ENCODE measurements at regions of chr18 and their contacts with region 1.

Region 1: DNA sequence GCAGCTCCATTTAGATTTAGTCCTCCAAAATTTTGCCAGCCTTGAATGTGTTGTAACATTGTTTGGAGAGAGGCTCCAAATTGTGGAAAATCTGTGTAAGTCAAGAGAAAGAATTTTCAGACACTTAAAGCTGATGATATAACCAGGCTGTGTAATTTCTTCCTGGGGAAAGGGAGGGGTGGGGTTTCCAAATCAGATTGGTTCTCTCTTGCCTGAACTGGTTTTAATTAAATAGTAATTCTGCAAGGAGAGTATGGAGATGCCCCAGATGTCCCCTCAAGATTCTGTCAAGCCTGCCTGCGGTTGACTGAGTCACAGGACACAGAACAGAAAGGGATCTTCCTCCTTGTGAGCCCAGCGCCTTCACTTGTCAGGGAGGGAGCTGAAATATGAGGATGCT is 54.5 kb downstream of the C18orf63 start:
- DNase-seq: no peak
- H3K4me3 Mint-ChIP-seq: no peak overlapping the region
- H3K27ac Mint-ChIP-seq: no peak overlapping the region
- H3K4me1 Mint-ChIP-seq: peaks cover 47% of the 10 kb centered on the region
- H3K27me3 Mint-ChIP-seq: peaks cover 43% of the 10 kb centered on the region

Region 2: DNA sequence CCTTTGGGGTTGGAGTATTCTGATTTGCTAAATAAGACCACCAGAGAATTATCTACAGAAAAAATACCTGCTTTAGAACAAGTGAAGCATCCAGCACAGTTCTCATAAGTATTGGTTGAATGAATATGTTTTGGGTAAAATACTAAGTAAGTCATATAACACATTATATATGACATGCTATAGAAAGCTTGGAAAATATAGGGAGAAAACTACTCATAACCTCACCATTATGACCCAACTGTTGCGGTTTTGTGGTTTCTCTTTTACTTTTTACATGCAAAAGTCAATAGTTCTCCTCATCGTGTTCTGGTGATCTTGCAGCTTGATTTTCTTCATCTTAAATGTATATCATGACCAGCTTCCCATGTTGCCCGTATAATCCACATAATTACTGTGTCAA is 20.8 kb after region 1 on chr18:
- intact Hi-C with region 1: loop called (anchors 2 kb)
- DNase-seq: no peak
- H3K4me3 Mint-ChIP-seq: no peak overlapping the region
- H3K27ac Mint-ChIP-seq: no peak overlapping the region
- H3K4me1 Mint-ChIP-seq: peaks cover 17% of the 10 kb centered on the region
- H3K27me3 Mint-ChIP-seq: peaks cover 52% of the 10 kb centered on the region

Region 3: DNA sequence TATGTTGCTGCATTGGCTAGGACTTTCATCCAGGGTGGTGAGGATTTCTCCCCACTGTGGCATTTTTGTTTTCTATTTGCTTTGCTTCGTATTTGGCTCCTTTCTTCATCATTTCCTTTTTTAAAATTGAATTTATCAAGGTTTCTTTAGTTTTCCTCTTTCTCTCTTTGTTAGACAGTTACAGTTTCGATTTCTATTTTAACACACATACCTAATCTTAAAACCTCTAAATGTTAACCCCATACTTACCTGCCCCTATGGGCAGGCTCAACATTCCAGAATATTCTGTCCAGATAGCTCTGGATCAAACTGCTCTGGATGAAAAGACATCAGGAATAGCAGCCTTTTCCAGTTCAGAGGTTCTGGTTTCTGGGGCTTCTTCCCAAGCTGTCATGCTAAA is 37.8 kb after region 1 on chr18:
- intact Hi-C with region 1: loop called (anchors 5 kb)
- DNase-seq: no peak
- H3K4me3 Mint-ChIP-seq: peak overlapping the region; percentile 53
- H3K27ac Mint-ChIP-seq: peak overlapping the region; percentile 77
- H3K4me1 Mint-ChIP-seq: peaks cover 27% of the 10 kb centered on the region
- H3K27me3 Mint-ChIP-seq: peaks cover 4% of the 10 kb centered on the region

Region 4: DNA sequence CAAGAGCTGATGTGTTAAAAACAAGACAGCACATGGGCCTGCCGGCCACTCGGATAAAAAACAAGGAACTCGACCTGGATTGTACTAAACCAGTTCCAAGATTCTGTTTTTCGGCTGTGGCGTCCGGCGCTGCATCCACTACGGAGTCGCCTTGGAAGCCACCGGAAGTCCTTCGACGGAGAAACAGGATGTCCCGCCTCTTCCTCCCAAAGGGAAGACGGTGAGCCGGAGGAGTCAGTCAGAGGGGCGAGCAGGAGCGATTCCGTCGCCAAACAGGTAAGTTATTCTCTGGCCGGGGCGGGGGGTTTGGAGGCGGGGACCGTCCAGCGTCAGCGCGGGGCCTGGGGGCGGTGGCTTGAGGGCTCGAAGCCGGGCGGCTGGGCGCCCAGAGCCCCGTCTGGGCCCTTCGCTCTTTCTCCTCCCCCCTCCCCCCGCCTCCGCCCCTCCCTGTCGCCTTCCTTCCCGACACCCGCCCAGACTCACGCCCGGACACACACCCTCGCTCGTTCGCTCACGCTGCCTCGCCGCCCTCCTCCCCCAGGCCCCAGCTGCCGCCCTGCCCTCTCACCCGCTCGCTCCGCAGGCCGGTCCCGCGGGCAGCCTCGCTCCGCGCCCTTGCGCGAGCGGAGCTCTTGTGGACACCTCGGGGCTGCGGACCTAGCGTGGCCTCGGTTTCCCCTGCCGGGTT is 227.7 kb after region 1 on chr18 and contains the start of gene ZNF407:
- intact Hi-C with region 1: loop called (anchors 5 kb)
- DNase-seq: peak; percentile 85
- H3K4me3 Mint-ChIP-seq: peak within 1 kb of the TSS; percentile 96
- H3K27ac Mint-ChIP-seq: peak within 1 kb of the TSS; percentile 98
- H3K4me1 Mint-ChIP-seq: peaks cover 44% of the 10 kb centered on the region
- H3K27me3 Mint-ChIP-seq: no peaks in the 10 kb centered on the region
- total RNA-seq, gene ZNF407: 18.3 TPM in 2 replicates